Dendritic cell treated with granulocyte-macrophage colony-stimulating factor and Interleukin-4, amounts not matched to agents 40 ng/mL and 50 ng/mL, for 4 days (primary cell): ENCODE measurements at regions of chr6 and their contacts with region 1.

Region 1: DNA sequence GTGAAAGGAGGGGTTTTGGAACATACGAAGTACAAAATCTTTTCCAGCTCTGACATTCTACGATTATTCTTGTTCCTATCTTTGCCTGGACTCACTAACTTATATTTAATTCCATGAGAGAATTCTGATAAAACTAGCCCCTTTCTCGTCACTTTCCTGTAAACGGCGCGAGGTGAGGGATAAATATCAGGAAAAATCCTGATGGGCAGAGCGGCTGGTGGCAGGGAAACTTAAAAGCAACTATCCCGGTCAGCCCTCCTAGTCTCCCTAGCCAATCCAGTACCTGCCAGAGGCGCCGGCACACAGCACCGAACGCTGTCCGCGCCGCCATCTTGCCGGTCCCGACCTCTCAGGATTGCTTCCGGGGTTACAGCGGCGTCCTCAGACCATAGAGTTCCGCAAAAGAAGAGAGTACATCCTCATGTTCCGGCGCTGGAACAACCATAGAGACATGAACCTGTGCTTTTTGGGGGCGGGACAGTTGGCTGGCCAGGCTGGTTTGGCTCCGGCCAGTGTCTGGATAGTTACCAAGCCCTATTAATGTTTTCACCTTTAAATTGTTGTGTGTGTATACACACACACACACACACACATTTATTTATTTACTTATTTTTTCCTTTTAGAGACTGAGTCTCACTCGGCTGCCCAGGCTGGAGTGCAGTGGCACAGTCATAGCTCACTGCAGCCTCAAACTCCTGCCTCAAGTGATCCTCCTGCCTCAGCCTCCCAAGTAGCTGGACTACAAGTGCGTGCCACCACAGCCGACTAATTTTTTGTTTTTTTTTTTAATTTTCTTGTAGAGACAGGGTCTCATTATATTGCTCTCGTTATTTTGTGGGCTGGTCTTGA is at the start of gene MRPS10:
- H3K4me3 Mint-ChIP-seq: peak within 1 kb of the TSS; percentile 89
- H3K27ac Mint-ChIP-seq: peak within 1 kb of the TSS; percentile 93
- H3K4me1 Mint-ChIP-seq: peaks cover 16% of the 10 kb centered on the region
- H3K27me3 Mint-ChIP-seq: no peaks in the 10 kb centered on the region

Region 2: GRCh38 chr6:42075159-42075838 is 142.4 kb before region 1 on chr6:
- intact Hi-C with region 1: loop called (anchors 1 kb)
- H3K4me3 Mint-ChIP-seq: no peak overlapping the region
- H3K27ac Mint-ChIP-seq: no peak overlapping the region
- H3K4me1 Mint-ChIP-seq: no peaks in the 10 kb centered on the region
- H3K27me3 Mint-ChIP-seq: no peaks in the 10 kb centered on the region

Region 3: GRCh38 chr6:42563697-42564505 is 346.2 kb after region 1 on chr6 and contains the start of gene UBR2:
- intact Hi-C with region 1: loop called (anchors 2 kb)
- H3K4me3 Mint-ChIP-seq: peak within 1 kb of the TSS; percentile 83
- H3K27ac Mint-ChIP-seq: peak within 1 kb of the TSS; percentile 96
- H3K4me1 Mint-ChIP-seq: peaks cover 27% of the 10 kb centered on the region
- H3K27me3 Mint-ChIP-seq: no peaks in the 10 kb centered on the region